Activated CD4-positive, alpha-beta T cell treated with anti-CD3 and anti-CD28 coated beads for 36 hours (primary cell): ENCODE measurements at regions of chr14 and their contacts with region 1.

Region 1: GRCh38 chr14:69574263-69574953 is at the start of gene CCDC177:
- DNase-seq: peak; percentile 88
- ATAC-seq: peak; percentile 78
- H3K4me3 Mint-ChIP-seq: peak within 1 kb of the TSS; percentile 58
- H3K27ac Mint-ChIP-seq: peak within 1 kb of the TSS; percentile 4
- H3K4me1 Mint-ChIP-seq: peaks cover 10% of the 10 kb centered on the region
- H3K27me3 Mint-ChIP-seq: peaks cover 42% of the 10 kb centered on the region
- total RNA-seq, gene CCDC177: not detected

Region 2: GRCh38 chr14:69242311-69243224 is 331.8 kb before region 1 on chr14:
- CTCF ChIA-PET with region 1: interaction called, 6 read pairs
- POLR2A ChIA-PET with region 1: no interaction called
- intact Hi-C with region 1: loop called (anchors 1 to 2 kb)
- DNase-seq: peak; percentile 70
- ATAC-seq: peak; percentile 86
- H3K4me3 Mint-ChIP-seq: no peak overlapping the region
- H3K27ac Mint-ChIP-seq: no peak overlapping the region
- H3K4me1 Mint-ChIP-seq: no peaks in the 10 kb centered on the region
- H3K27me3 Mint-ChIP-seq: no peaks in the 10 kb centered on the region

Region 3: DNA sequence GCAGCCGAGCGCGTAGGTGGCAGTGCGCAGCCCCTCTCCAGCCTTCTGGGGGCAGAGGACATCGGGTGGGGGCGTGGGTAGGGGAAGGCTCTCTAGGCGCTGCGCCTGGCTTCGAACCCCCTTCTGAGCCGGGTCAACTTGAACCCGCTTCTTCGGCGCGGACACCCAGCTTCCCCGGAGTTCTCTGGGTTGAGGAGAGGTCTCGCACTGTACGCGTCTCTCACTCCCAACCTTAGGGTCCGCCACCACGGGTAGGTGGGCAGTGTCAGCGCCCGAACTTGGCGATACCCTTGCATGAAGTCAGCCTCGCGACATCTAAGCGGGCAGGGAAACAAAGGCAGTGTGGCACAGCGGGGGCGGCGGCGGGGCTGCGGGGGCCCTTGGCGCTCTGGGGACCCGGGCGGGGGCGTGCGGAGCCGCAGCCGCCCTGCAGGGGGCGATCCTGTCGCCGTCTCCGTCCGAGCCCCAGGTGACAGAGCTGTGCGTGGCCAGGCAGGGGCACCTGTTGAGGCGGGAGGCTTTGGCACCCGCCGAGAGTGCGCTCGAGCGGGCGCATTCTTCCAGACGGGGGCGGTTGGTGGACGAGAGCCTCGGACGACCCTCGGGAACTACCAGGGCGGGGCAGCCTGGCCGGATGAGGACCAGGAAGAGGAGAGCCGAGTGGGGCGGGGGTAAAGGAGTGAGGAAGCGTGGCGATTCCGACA is 313.4 kb before region 1 on chr14:
- CTCF ChIA-PET with region 1: interaction called, 5 read pairs
- POLR2A ChIA-PET with region 1: no interaction called
- intact Hi-C with region 1: loop called in 1 of 2 experiments (anchors 5 kb)
- DNase-seq: peak; percentile 74
- ATAC-seq: peak; percentile 88
- H3K4me3 Mint-ChIP-seq: peak overlapping the region; percentile 27
- H3K27ac Mint-ChIP-seq: no peak overlapping the region
- H3K4me1 Mint-ChIP-seq: peaks cover 7% of the 10 kb centered on the region
- H3K27me3 Mint-ChIP-seq: peaks cover 45% of the 10 kb centered on the region

Region 4: GRCh38 chr14:69475194-69475818 is 99.1 kb before region 1 on chr14:
- CTCF ChIA-PET with region 1: interaction called, 3 read pairs
- POLR2A ChIA-PET with region 1: no interaction called
- intact Hi-C with region 1: loop called in 1 of 2 experiments (anchors 5 kb)
- DNase-seq: peak; percentile 29
- ATAC-seq: peak; percentile 53
- H3K4me3 Mint-ChIP-seq: no peak overlapping the region
- H3K27ac Mint-ChIP-seq: no peak overlapping the region
- H3K4me1 Mint-ChIP-seq: no peaks in the 10 kb centered on the region
- H3K27me3 Mint-ChIP-seq: peaks cover 2% of the 10 kb centered on the region

Region 5: DNA sequence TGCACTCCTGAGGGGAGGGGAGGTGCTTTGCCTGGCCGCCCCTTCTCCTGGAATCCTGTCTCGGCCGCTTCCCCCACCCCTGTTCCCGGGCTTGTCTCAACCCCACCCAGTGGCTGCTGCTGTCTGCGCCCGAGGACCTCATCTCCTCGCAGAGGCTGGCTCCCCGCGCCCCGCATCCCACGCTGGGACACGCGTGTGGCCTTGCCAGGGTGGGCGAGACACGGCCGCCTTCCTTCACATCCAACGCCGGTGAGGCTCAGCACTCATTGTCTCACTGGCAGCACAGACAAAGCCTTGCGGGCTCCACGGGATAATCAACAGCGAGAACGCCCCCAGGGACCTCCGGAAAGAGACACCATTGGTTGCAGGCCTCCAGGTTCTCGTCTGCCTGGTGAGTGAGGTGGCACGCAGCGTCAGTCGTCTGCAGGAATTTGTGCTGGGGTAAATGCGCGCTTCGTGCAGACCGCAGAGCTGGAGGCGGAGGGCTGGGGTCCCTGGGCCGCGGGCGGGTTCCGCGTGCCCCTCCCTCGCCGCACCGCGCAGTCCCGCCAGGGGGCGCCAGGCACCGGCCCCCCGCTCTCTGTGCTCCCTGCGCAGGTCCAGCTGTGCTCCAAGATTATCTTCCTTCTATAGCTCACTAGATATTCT is 26.6 kb before region 1 on chr14:
- CTCF ChIA-PET with region 1: interaction called, 14 read pairs
- POLR2A ChIA-PET with region 1: interaction called, 4 read pairs
- intact Hi-C with region 1: loop called (anchors 1 to 2 kb)
- DNase-seq: peak; percentile 66
- ATAC-seq: peak; percentile 50
- H3K4me3 Mint-ChIP-seq: no peak overlapping the region
- H3K27ac Mint-ChIP-seq: no peak overlapping the region
- H3K4me1 Mint-ChIP-seq: peaks cover 9% of the 10 kb centered on the region
- H3K27me3 Mint-ChIP-seq: peaks cover 30% of the 10 kb centered on the region

Region 6: DNA sequence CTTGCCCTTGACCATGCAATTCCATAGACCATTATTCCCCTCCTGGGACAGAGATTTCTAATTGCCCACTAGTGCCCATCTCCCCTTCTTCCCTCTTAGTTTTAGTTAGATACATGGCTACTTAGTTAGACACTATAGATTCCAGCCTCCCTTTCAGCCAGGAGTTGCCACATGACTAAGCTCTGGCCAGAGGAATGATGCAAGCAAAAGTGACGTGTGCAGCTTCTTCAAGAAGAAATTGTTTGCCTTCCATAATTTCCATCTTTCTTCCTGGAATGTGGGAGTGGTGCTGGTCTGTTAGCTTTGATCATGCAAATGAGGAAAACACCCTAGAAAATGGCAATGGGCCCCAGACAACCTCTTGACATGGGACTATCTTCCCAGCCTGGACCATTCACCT is 21.2 kb before region 1 on chr14:
- CTCF ChIA-PET with region 1: interaction called, 14 read pairs
- POLR2A ChIA-PET with region 1: interaction called, 4 read pairs
- intact Hi-C with region 1: loop called (anchors 1 to 2 kb)
- DNase-seq: no peak
- ATAC-seq: no peak
- H3K4me3 Mint-ChIP-seq: no peak overlapping the region
- H3K27ac Mint-ChIP-seq: no peak overlapping the region
- H3K4me1 Mint-ChIP-seq: no peaks in the 10 kb centered on the region
- H3K27me3 Mint-ChIP-seq: peaks cover 12% of the 10 kb centered on the region

Region 7: DNA sequence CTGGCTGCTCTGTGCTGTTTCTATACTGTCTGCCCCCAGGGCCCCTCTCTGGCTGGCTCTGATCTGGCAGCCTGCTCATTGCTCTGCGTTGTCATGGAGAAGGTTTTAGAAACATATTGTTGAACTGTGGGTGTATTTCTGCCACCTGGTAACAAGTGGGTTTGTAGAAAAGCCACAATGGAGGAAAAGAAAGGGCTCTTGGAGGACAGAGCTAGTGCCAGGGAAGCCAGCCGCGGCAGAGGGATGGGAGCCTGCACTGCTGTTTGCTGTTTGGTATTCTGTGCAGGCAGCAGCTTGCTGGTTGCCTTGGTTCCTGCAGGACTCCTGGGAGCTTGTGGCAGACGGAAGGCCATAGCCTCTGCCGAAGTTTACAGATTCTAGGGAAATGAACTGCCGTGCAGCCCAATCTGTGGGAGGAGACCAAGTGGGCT is 14.8 kb before region 1 on chr14:
- CTCF ChIA-PET with region 1: interaction called, 13 read pairs
- POLR2A ChIA-PET with region 1: no interaction called
- intact Hi-C with region 1: no loop called
- DNase-seq: no peak
- ATAC-seq: no peak
- H3K4me3 Mint-ChIP-seq: no peak overlapping the region
- H3K27ac Mint-ChIP-seq: no peak overlapping the region
- H3K4me1 Mint-ChIP-seq: no peaks in the 10 kb centered on the region
- H3K27me3 Mint-ChIP-seq: peaks cover 22% of the 10 kb centered on the region